ENCODE measurements at regions of chr2 and their contacts with region 1.

Region 1: GRCh38 chr2:241309684-241310117 is 5.8 kb downstream of the HDLBP start:
- DNase-seq: peak; percentile 53
- H3K4me3 ChIP-seq: no peak overlapping the region
- H3K27ac ChIP-seq: no peak overlapping the region
- H3K4me1 ChIP-seq: peaks cover 46% of the 10 kb centered on the region
- H3K27me3 ChIP-seq: no peaks in the 10 kb centered on the region
- CTCF ChIP-seq: no peak

Region 2: GRCh38 chr2:241232736-241233554 is 76.8 kb before region 1 on chr2:
- CTCF ChIA-PET with region 1: no interaction called
- dilution Hi-C with region 1: loop called (anchors 5 kb)
- in situ Hi-C with region 1: no loop called
- intact Hi-C with region 1: no loop called
- DNase-seq: no peak
- H3K4me3 ChIP-seq: no peak overlapping the region
- H3K27ac ChIP-seq: no peak overlapping the region
- H3K4me1 ChIP-seq: no peaks in the 10 kb centered on the region
- H3K27me3 ChIP-seq: no peaks in the 10 kb centered on the region
- CTCF ChIP-seq: no peak

Region 3: GRCh38 chr2:241279413-241279812 is 30.3 kb before region 1 on chr2:
- CTCF ChIA-PET with region 1: no interaction called
- dilution Hi-C with region 1: loop called (anchors 5 kb)
- in situ Hi-C with region 1: no loop called
- intact Hi-C with region 1: no loop called
- DNase-seq: no peak
- H3K4me3 ChIP-seq: no peak overlapping the region
- H3K27ac ChIP-seq: no peak overlapping the region
- H3K4me1 ChIP-seq: no peaks in the 10 kb centered on the region
- H3K27me3 ChIP-seq: no peaks in the 10 kb centered on the region
- CTCF ChIP-seq: no peak

Region 4: GRCh38 chr2:241339839-241340630 is 30.3 kb after region 1 on chr2:
- CTCF ChIA-PET with region 1: no interaction called
- dilution Hi-C with region 1: no loop called
- in situ Hi-C with region 1: no loop called
- intact Hi-C with region 1: no loop called
- DNase-seq: no peak
- H3K4me3 ChIP-seq: no peak overlapping the region
- H3K27ac ChIP-seq: no peak overlapping the region
- H3K4me1 ChIP-seq: no peaks in the 10 kb centered on the region
- H3K27me3 ChIP-seq: no peaks in the 10 kb centered on the region
- CTCF ChIP-seq: no peak

Region 5: GRCh38 chr2:241514986-241515737 is 205.5 kb after region 1 on chr2:
- CTCF ChIA-PET with region 1: no interaction called
- dilution Hi-C with region 1: loop called (anchors 5 kb)
- in situ Hi-C with region 1: no loop called
- intact Hi-C with region 1: no loop called
- DNase-seq: no peak
- H3K4me3 ChIP-seq: no peak overlapping the region
- H3K27ac ChIP-seq: no peak overlapping the region
- H3K4me1 ChIP-seq: no peaks in the 10 kb centered on the region
- H3K27me3 ChIP-seq: no peaks in the 10 kb centered on the region
- CTCF ChIP-seq: no peak